Prostate gland (tissue), 2 donors: ENCODE measurements at regions of chr2 and their contacts with region 1.

Region 1: DNA sequence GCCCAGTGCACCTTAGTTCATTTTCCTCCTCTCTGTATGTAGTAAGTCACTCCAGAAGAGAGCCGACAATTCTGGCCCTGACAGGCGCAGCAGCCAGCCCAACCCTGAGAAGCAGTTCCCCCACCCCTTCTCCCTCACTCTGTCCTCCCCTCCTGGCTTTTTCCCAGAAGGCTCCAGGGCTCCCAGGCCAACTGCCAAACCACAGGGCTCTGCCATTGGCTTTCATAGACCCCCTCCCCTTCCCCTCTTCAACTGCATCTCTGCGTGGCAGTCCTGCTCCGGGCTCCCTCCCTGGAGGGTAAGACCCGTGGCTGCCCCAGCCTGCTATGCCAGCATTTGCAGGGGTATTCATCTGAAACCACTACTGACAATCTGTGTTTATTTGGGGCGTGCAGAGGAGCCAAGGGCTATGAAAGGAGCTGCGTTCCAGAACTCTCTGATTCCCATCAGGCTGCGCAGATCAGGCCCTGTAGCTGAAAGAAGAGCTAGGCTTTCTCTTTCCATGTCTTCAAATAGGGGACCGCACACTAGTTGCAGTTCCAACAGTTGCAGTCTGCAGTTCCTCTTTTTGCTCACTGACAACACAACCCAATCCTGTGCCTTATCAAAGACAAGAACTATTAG is 388.6 kb upstream of the TNP1 start:
- DNase-seq: peak; percentile 57
- H3K4me3 ChIP-seq: no peak overlapping the region
- H3K27ac ChIP-seq: peak overlapping the region; percentile 61 to 81
- H3K4me1 ChIP-seq: peaks cover 8% of the 10 kb centered on the region
- H3K27me3 ChIP-seq: no peaks in the 10 kb centered on the region
- CTCF ChIP-seq: no peak
- POLR2A ChIP-seq: no peak

Region 2: GRCh38 chr2:216698895-216699294 is 549.5 kb before region 1 on chr2:
- intact Hi-C with region 1: loop called (anchors 2 kb)
- DNase-seq: peak; percentile 36
- H3K4me3 ChIP-seq: no peak overlapping the region
- H3K27ac ChIP-seq: peak overlapping the region in 1 of 2 donors; percentile 12
- H3K4me1 ChIP-seq: peaks cover 6% of the 10 kb centered on the region
- H3K27me3 ChIP-seq: no peaks in the 10 kb centered on the region
- CTCF ChIP-seq: peak; percentile 33 to 72 (median 58)
- POLR2A ChIP-seq: no peak

Region 3: GRCh38 chr2:216807857-216808272 is 440.6 kb before region 1 on chr2:
- intact Hi-C with region 1: no loop called
- DNase-seq: no peak
- H3K4me3 ChIP-seq: no peak overlapping the region
- H3K27ac ChIP-seq: no peak overlapping the region
- H3K4me1 ChIP-seq: no peaks in the 10 kb centered on the region
- H3K27me3 ChIP-seq: no peaks in the 10 kb centered on the region
- CTCF ChIP-seq: no peak
- POLR2A ChIP-seq: no peak

Region 4: DNA sequence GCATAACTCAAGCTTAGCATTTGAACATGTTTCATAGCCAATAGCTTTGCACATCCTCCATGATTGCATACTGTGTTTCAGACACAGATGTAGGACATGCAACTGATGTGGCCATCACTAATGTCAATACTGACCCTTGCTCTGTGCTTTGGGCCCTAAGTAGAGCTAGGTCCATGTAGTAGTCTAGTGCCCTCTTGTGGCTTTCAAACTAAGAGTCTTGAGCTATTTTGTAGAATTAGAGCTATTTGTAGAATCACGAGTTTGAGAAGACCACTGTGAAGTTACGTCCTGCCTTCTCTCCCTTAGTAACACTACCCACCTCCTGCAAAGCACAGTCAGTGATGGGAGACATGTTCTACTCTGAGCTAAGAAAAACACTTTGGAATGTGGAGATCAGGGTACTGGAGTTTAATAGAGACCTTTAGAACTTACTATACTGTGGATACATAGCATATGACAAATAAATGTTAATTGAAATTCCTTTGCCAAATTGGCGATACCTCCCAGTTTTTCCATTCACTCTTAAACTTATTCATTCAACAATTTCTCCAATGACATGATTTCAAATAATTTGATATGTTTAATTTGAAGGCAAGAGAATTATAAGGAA is 82.1 kb before region 1 on chr2:
- intact Hi-C with region 1: no loop called
- DNase-seq: no peak
- H3K4me3 ChIP-seq: no peak overlapping the region
- H3K27ac ChIP-seq: no peak overlapping the region
- H3K4me1 ChIP-seq: no peaks in the 10 kb centered on the region
- H3K27me3 ChIP-seq: no peaks in the 10 kb centered on the region
- CTCF ChIP-seq: peak in 2 of 4 experiments; percentile 36 to 44
- POLR2A ChIP-seq: no peak

Region 5: DNA sequence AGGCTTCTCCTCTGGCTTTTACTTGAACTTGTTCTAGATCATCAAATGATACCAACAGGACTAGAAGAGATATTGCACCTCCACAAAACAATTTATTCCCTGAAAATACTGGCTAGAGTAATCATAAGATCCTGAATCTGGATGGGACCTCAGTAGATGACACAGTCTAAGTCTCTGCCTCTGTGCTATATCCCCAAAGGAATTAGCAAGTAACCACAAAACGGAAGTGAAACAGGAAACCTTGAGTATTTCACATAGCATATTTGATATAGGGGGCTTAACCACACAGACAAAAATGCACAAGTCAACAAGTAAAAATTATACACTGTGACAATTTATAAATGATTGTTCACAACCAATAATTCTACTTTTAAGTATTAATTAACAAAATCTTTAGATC is 68.3 kb after region 1 on chr2:
- intact Hi-C with region 1: loop called (anchors 10 kb)
- DNase-seq: no peak
- H3K4me3 ChIP-seq: no peak overlapping the region
- H3K27ac ChIP-seq: no peak overlapping the region
- H3K4me1 ChIP-seq: no peaks in the 10 kb centered on the region
- H3K27me3 ChIP-seq: no peaks in the 10 kb centered on the region
- CTCF ChIP-seq: no peak
- POLR2A ChIP-seq: no peak

Region 6: GRCh38 chr2:217415316-217415715 is 166.9 kb after region 1 on chr2:
- intact Hi-C with region 1: loop called (anchors 5 kb)
- DNase-seq: no peak
- H3K4me3 ChIP-seq: no peak overlapping the region
- H3K27ac ChIP-seq: no peak overlapping the region
- H3K4me1 ChIP-seq: no peaks in the 10 kb centered on the region
- H3K27me3 ChIP-seq: no peaks in the 10 kb centered on the region
- CTCF ChIP-seq: no peak
- POLR2A ChIP-seq: no peak

Region 7: DNA sequence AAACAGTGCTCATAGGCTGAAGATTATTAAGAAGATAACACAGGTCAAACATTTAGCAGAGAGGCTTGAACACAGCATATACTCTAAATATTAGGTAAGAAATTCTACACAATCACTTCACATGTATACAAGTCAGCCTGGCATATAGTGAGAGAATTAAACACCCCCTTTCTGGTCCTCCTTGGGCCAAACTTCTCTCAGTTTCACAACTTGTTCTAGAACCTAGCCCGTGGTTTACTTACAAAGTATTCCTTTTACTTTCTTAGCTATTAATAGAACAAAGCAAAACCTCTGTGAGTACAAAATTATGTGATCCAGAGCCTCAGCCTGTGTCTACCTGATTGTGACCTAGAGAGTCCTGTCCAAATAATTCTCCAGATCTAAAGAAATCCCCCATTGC is 191.6 kb after region 1 on chr2:
- intact Hi-C with region 1: no loop called
- DNase-seq: no peak
- H3K4me3 ChIP-seq: no peak overlapping the region
- H3K27ac ChIP-seq: peak overlapping the region; percentile 25 to 48
- H3K4me1 ChIP-seq: no peaks in the 10 kb centered on the region
- H3K27me3 ChIP-seq: no peaks in the 10 kb centered on the region
- CTCF ChIP-seq: no peak
- POLR2A ChIP-seq: no peak

Region 8: DNA sequence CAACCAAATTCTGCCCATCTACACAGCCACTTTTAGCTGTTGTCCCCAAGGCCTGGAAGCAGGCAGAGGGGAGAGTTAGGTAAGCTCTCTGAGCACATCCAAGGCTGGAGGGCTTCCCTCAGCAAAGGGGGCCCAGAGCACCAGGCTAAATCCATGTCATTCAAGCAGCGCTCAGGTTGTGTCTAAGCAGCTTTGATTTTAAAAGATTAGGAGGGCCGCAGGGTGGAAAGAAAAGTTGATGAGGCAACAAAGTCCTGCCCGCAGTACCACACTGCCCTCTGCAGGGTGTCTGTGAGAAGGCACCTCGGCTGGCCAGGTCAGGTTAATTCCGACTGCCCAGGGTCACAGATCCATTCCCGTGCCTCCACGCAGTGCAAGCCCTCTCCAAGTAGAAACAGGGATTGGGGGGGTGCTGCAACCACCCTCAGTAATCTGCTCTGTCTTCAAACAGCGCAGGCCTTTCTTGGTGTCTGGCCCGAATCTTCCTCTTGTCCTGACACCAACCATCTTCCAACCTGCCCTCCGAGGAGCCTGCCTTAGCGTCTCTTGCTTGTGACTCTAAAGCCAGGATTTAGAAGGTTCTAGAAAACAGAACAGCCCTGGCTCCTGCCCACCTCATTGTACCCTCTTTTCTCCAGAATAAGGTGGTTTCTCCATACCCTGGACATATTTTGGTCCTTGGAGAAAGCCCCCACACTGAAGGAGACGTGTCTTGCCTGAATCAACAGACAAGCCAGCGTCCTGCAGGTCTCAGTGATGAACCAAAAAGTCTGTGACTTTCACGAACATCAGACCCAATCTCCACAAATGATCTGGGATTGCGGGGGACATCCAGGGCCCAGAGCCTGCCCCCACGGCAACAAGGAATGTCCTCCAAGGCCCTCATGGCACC is 465.2 kb after region 1 on chr2:
- intact Hi-C with region 1: loop called (anchors 10 kb)
- DNase-seq: peak; percentile 64
- H3K4me3 ChIP-seq: no peak overlapping the region
- H3K27ac ChIP-seq: peak overlapping the region; percentile 52 to 54
- H3K4me1 ChIP-seq: no peaks in the 10 kb centered on the region
- H3K27me3 ChIP-seq: no peaks in the 10 kb centered on the region
- CTCF ChIP-seq: peak; percentile 85 to 97 (median 93)
- POLR2A ChIP-seq: no peak